Activated CD4-positive, alpha-beta memory T cell treated with anti-CD3 and anti-CD28 coated beads for 36 hours (primary cell): ENCODE measurements at regions of chr3 and their contacts with region 1.

Region 1: GRCh38 chr3:18559331-18559842 is 134.2 kb upstream of the SATB1 start:
- DNase-seq: peak; percentile 51
- H3K4me3 Mint-ChIP-seq: peak overlapping the region; percentile 14
- H3K27ac Mint-ChIP-seq: peak overlapping the region; percentile 93
- H3K4me1 Mint-ChIP-seq: peaks cover 80% of the 10 kb centered on the region
- H3K27me3 Mint-ChIP-seq: no peaks in the 10 kb centered on the region

Region 2: GRCh38 chr3:17775073-17775472 is 784.3 kb before region 1 on chr3:
- CTCF ChIA-PET with region 1: no interaction called
- POLR2A ChIA-PET with region 1: no interaction called
- intact Hi-C with region 1: no loop called
- DNase-seq: peak; percentile 41
- H3K4me3 Mint-ChIP-seq: peak overlapping the region; percentile 67
- H3K27ac Mint-ChIP-seq: peak overlapping the region; percentile 75
- H3K4me1 Mint-ChIP-seq: peaks cover 14% of the 10 kb centered on the region
- H3K27me3 Mint-ChIP-seq: peaks cover 9% of the 10 kb centered on the region

Region 3: GRCh38 chr3:18207226-18207625 is 352.2 kb before region 1 on chr3:
- CTCF ChIA-PET with region 1: no interaction called
- POLR2A ChIA-PET with region 1: no interaction called
- intact Hi-C with region 1: no loop called
- DNase-seq: peak; percentile 51
- H3K4me3 Mint-ChIP-seq: no peak overlapping the region
- H3K27ac Mint-ChIP-seq: no peak overlapping the region
- H3K4me1 Mint-ChIP-seq: peaks cover 18% of the 10 kb centered on the region
- H3K27me3 Mint-ChIP-seq: peaks cover 13% of the 10 kb centered on the region

Region 4: DNA sequence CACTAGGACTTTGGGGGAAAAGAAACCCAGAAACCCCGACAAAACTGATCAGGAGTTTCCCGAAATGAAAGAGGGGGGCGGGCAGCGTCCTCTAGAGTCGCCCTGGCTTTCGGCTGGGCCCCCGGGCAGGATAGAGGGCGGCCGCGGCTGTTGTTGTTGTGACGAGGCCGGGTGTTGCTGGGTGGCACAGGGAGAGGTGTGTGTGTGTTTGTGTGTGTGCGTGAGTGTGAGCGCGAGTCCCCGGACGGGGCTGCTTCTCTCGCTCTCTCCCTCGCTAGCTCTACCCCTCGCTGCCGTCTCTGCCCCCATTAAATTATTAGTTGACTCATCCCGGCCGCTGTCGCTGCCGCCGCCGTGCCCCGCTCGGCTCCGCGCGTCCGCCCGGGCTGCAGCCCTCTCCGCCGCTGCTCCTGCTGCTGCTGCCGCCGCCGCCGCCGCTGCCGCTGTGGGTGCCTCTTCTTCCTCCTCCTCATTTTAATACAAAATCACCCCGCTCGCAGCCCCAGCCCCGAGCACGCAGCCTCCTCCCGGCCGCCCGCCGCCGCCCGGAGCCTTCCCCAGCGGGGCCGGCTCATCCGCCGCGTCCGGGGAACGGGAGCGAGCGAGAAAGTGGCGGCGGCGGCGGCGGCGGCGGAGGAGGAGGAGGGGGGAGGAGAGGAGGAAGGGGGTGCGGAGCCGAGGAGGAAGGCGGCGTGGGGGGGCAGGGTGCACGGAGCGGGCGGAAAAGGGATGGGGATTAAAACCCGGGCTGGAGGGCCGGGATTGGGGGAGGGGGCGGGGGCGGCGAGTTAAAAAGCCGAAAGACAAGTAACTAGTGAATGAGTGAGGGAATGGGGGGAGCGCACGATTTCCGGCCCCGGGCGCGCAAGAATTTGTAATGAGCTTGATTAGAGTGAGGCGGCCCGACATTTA is 134.4 kb before region 1 on chr3 and contains the start of gene SATB1:
- CTCF ChIA-PET with region 1: no interaction called
- POLR2A ChIA-PET with region 1: interaction called, 3 read pairs
- intact Hi-C with region 1: loop called (anchors 1 kb)
- DNase-seq: peak; percentile 78
- H3K4me3 Mint-ChIP-seq: peak within 1 kb of the TSS; percentile 86
- H3K27ac Mint-ChIP-seq: peak within 1 kb of the TSS; percentile 84
- H3K4me1 Mint-ChIP-seq: peaks cover 74% of the 10 kb centered on the region
- H3K27me3 Mint-ChIP-seq: no peaks in the 10 kb centered on the region
- total RNA-seq, gene SATB1: 546 to 561 TPM

Region 5: GRCh38 chr3:18531662-18532236 is 27.6 kb before region 1 on chr3:
- CTCF ChIA-PET with region 1: no interaction called
- POLR2A ChIA-PET with region 1: no interaction called
- intact Hi-C with region 1: loop called (anchors 1 kb)
- DNase-seq: peak; percentile 9
- H3K4me3 Mint-ChIP-seq: no peak overlapping the region
- H3K27ac Mint-ChIP-seq: no peak overlapping the region
- H3K4me1 Mint-ChIP-seq: peaks cover 17% of the 10 kb centered on the region
- H3K27me3 Mint-ChIP-seq: no peaks in the 10 kb centered on the region

Region 6: DNA sequence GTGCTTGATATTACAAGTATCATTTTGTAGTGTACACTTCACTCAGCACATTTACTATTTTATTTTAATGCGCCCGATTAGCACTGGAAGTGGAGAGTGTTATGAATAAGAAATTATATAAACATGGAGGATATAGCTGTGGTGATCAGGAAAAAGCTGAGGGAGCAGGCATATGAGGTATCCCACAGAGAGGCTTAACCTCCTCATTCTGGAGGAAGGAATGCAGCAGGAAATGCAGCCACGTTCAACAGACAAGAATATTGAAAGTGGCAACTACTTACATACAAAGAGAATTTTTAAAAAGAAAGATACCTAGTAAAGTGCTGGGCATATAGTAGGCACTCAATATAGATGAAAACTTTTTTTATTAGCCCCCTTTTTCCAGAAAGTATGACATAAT is 31.7 kb after region 1 on chr3:
- CTCF ChIA-PET with region 1: no interaction called
- POLR2A ChIA-PET with region 1: no interaction called
- intact Hi-C with region 1: no loop called
- DNase-seq: no peak
- H3K4me3 Mint-ChIP-seq: no peak overlapping the region
- H3K27ac Mint-ChIP-seq: no peak overlapping the region
- H3K4me1 Mint-ChIP-seq: no peaks in the 10 kb centered on the region
- H3K27me3 Mint-ChIP-seq: no peaks in the 10 kb centered on the region

Region 7: DNA sequence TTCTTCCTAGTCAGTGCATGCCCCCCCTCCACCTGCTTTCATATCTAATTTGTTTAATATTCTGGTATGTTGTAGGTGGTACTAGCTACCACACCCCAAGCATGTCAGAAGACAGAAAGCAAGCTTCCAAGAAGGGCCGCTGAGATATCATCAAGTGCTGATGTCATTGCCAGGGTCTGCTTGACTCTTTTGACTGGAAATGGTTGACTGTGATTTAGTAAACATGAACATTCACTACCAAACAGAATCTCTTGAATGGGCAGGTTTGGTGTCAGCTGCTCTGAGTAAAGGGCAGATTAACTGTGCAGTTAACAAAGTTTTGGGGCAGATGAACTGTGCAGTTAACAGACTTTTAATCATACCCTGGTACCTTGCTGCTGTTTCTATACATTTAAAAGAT is 110.0 kb after region 1 on chr3:
- CTCF ChIA-PET with region 1: interaction called, 7 read pairs
- POLR2A ChIA-PET with region 1: interaction called, 3 read pairs
- intact Hi-C with region 1: loop called (anchors 1 kb)
- DNase-seq: peak; percentile 77
- H3K4me3 Mint-ChIP-seq: peak overlapping the region; percentile 18
- H3K27ac Mint-ChIP-seq: peak overlapping the region; percentile 89
- H3K4me1 Mint-ChIP-seq: peaks cover 53% of the 10 kb centered on the region
- H3K27me3 Mint-ChIP-seq: no peaks in the 10 kb centered on the region

Region 8: DNA sequence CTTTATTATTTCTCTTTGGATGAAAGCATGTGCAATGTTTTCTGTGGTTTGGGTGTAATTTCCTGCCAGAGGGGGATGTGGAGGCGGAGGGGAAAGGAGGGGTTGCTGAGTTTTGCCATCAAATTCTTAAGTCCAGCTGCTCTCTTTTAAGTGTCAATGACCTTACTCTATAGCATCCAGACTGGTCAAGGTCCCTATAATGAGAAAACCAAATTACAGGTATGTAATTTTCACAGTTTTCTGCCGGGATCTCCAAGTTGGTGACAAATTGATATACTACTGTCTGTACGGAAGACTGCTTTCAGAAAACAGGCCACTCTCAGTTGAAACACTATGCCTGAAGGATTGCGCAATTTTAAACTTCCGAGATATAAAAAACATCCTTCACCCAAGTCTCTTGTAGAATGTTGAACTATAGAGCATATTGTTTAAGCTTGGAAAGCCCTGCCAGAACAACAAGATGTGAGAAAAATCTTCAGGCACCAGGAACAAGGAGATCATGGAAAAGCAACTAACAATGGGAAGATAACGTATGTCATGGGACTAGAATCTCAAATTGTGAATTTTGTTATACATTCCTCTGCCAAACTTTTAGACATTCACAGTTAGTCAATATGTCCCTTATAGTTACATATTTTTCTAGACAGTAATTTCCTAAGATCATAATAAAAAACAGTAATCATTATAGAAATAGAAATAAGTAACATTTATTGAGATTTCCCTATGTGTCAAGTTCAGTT is 166.5 kb after region 1 on chr3:
- CTCF ChIA-PET with region 1: interaction called, 10 read pairs
- POLR2A ChIA-PET with region 1: no interaction called
- intact Hi-C with region 1: no loop called
- DNase-seq: peak; percentile 66
- H3K4me3 Mint-ChIP-seq: peak overlapping the region; percentile 78
- H3K27ac Mint-ChIP-seq: peak overlapping the region; percentile 94
- H3K4me1 Mint-ChIP-seq: peaks cover 79% of the 10 kb centered on the region
- H3K27me3 Mint-ChIP-seq: no peaks in the 10 kb centered on the region

Region 9: GRCh38 chr3:18868911-18869689 is 309.7 kb after region 1 on chr3:
- CTCF ChIA-PET with region 1: no interaction called
- POLR2A ChIA-PET with region 1: no interaction called
- intact Hi-C with region 1: loop called (anchors 1 kb)
- DNase-seq: peak; percentile 52
- H3K4me3 Mint-ChIP-seq: no peak overlapping the region
- H3K27ac Mint-ChIP-seq: peak overlapping the region; percentile 88
- H3K4me1 Mint-ChIP-seq: peaks cover 42% of the 10 kb centered on the region
- H3K27me3 Mint-ChIP-seq: peaks cover 11% of the 10 kb centered on the region

Region 10: GRCh38 chr3:20054549-20054987 is 1495.2 kb after region 1 on chr3:
- CTCF ChIA-PET with region 1: no interaction called
- POLR2A ChIA-PET with region 1: no interaction called
- intact Hi-C with region 1: loop called (anchors 2 kb)
- DNase-seq: peak; percentile 88
- H3K4me3 Mint-ChIP-seq: no peak overlapping the region
- H3K27ac Mint-ChIP-seq: no peak overlapping the region
- H3K4me1 Mint-ChIP-seq: peaks cover 39% of the 10 kb centered on the region
- H3K27me3 Mint-ChIP-seq: no peaks in the 10 kb centered on the region